ENCODE measurements at regions of chr5 and their contacts with region 1.

Region 1: GRCh38 chr5:96997265-96997859 is 61.5 kb downstream of the LNPEP start:
- DNase-seq: no peak
- ATAC-seq: no peak
- H3K4me3 ChIP-seq: no peak overlapping the region
- H3K27ac ChIP-seq: no peak overlapping the region
- H3K4me1 ChIP-seq: no peaks in the 10 kb centered on the region
- H3K27me3 ChIP-seq: no peaks in the 10 kb centered on the region

Region 2: DNA sequence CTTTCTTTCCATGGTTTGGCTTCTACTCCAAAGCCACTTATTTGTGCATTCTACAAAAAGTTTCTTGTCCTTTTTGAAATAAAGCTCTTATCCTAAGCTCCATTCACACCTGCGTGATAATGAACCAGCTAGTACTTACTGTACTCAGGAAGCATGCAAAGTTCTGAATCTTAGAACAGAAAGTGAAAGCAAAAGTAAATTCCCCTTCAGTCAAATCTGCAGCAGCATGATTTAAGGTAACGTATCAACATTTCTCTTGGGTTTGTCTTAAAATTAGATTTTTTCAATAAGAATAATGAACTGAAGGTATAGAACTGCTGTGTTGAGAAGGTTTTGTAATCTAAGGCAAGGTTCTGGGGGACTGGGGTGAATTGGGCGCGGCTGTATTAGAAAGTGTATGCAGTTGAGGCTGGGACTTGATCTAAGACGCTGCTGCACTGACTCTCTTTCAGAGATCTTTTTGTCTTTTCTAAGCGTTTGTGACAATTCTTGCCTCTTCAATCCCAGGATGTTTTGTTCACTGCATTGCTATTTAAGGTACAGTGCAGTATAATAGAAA is 121.0 kb before region 1 on chr5 and contains the start of gene ERAP2:
- intact Hi-C with region 1: loop called in 1 of 2 experiments (anchors 10 kb)
- DNase-seq: no peak
- ATAC-seq: peak; percentile 65
- H3K4me3 ChIP-seq: peak within 1 kb of the TSS; percentile 96 to 99
- H3K27ac ChIP-seq: peak within 1 kb of the TSS in 1 of 2 donors; percentile 25
- H3K4me1 ChIP-seq: no peaks in the 10 kb centered on the region
- H3K27me3 ChIP-seq: no peaks in the 10 kb centered on the region
- total RNA-seq, gene ERAP2: 10.8 to 24.2 TPM

Region 3: GRCh38 chr5:97044052-97044451 is 46.7 kb after region 1 on chr5:
- intact Hi-C with region 1: no loop called
- DNase-seq: no peak
- ATAC-seq: peak; percentile 40
- H3K4me3 ChIP-seq: no peak overlapping the region
- H3K27ac ChIP-seq: no peak overlapping the region
- H3K4me1 ChIP-seq: no peaks in the 10 kb centered on the region
- H3K27me3 ChIP-seq: no peaks in the 10 kb centered on the region

Region 4: GRCh38 chr5:97062046-97062445 is 64.7 kb after region 1 on chr5:
- intact Hi-C with region 1: no loop called
- DNase-seq: no peak
- ATAC-seq: no peak
- H3K4me3 ChIP-seq: no peak overlapping the region
- H3K27ac ChIP-seq: no peak overlapping the region
- H3K4me1 ChIP-seq: no peaks in the 10 kb centered on the region
- H3K27me3 ChIP-seq: peaks cover 0 to 3% of the 10 kb centered on the region in 2 donors

Region 5: GRCh38 chr5:97078958-97079743 is 81.8 kb after region 1 on chr5:
- intact Hi-C with region 1: no loop called
- DNase-seq: no peak
- ATAC-seq: no peak
- H3K4me3 ChIP-seq: no peak overlapping the region
- H3K27ac ChIP-seq: no peak overlapping the region
- H3K4me1 ChIP-seq: no peaks in the 10 kb centered on the region
- H3K27me3 ChIP-seq: no peaks in the 10 kb centered on the region

Region 6: DNA sequence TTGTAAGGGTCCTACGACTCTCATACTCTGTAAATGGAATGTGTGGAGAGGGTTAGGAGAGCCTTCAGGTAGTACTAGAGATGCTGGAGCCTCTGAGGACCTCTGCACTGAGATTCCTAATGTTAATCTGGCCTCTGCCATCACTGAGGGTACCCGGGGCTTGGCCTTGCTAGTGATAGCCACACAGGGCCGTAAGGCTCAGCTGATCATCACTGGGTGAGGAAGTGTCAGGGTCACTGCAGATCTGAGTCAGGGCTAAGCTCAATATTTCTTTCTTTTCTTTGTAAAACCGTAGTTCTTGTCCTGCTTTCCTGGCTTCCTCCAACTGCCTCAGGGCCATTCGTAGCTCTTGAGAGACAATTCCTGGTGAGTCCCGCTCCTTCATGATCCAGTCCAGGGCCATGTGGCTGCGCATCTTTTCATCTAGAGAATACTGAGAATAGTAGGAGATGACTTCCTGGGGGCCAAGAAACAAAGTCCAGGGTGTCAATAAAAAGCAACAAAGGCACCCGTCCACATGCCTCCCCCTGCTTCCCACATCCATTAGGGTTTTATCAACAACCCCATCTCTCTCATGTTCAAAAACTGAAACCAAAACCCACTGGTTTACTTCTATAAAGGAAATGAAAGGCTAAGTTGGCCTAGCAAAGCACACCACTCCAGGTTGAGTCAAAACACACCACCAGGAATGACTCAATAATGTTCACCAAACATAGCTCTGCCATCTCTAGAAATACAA is 97.4 kb after region 1 on chr5:
- intact Hi-C with region 1: no loop called
- DNase-seq: no peak
- ATAC-seq: no peak
- H3K4me3 ChIP-seq: no peak overlapping the region
- H3K27ac ChIP-seq: no peak overlapping the region
- H3K4me1 ChIP-seq: no peaks in the 10 kb centered on the region
- H3K27me3 ChIP-seq: peaks cover 0 to 2% of the 10 kb centered on the region in 2 donors